ENCODE measurements at regions of chr11 and their contacts with region 1.

Region 1: GRCh38 chr11:128917144-128917724 is 25.4 kb downstream of the TP53AIP1 start:
- DNase-seq: peak in 2 of 9 experiments; percentile 17 to 23
- ATAC-seq: no peak
- H3K4me3 ChIP-seq: no peak overlapping the region
- H3K4me3 Mint-ChIP-seq: no peak overlapping the region
- H3K27ac ChIP-seq: no peak overlapping the region
- H3K27ac Mint-ChIP-seq: no peak overlapping the region
- H3K4me1 ChIP-seq: no peaks in the 10 kb centered on the region
- H3K4me1 Mint-ChIP-seq: no peaks in the 10 kb centered on the region
- H3K27me3 ChIP-seq: no peaks in the 10 kb centered on the region
- H3K27me3 Mint-ChIP-seq: peaks cover 14% of the 10 kb centered on the region
- CTCF ChIP-seq: no peak

Region 2: DNA sequence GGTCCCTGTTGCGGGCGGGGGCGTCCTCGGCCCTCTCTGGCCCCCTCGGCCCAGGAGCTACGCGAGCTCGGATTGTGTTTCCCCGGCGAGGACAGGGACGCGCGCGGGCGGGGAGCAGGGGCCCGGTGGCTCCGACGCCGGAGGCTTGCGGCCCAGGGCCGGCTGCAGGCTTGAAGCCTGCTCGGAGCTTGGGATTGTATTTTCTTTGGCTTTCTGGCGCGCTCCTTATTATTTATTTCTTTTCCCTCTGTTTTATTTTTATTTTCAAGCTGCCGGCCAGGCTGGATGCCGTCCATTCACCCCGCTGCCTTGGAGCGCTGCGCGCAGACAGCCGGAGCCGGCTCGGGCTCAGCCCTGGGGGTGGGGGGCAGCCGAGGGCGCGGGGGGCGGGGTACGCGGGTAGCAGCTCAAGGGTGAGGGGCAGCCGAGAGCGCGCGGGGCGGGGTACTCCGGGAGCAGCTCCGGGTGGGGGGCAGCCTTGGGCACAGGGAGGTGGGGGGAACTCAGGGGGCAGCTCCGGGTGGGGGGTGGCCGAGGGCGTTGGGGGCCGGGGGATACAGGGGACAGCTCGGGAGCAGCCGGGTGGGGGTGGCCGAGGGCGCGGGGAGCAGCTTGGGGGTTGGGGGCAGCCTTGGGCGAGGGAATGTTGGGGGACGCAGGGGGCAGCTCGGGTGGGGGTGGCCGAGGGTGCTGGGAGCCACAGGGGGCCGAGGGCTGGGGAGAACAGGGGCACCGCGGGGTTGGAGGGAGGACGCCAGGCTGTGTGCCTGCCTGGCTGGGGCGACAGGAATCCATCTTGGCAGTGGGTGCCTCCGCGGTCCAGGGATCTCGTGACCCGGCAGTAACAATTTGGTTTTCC is 92.8 kb before region 1 on chr11:
- CTCF ChIA-PET with region 1: no interaction called
- POLR2A ChIA-PET with region 1: no interaction called
- intact Hi-C with region 1: no loop called
- DNase-seq: peak in 1 of 9 experiments; percentile 44
- ATAC-seq: no peak
- H3K4me3 ChIP-seq: no peak overlapping the region
- H3K4me3 Mint-ChIP-seq: no peak overlapping the region
- H3K27ac ChIP-seq: no peak overlapping the region
- H3K27ac Mint-ChIP-seq: no peak overlapping the region
- H3K4me1 ChIP-seq: no peaks in the 10 kb centered on the region
- H3K4me1 Mint-ChIP-seq: no peaks in the 10 kb centered on the region
- H3K27me3 ChIP-seq: no peaks in the 10 kb centered on the region
- H3K27me3 Mint-ChIP-seq: no peaks in the 10 kb centered on the region
- CTCF ChIP-seq: no peak

Region 3: DNA sequence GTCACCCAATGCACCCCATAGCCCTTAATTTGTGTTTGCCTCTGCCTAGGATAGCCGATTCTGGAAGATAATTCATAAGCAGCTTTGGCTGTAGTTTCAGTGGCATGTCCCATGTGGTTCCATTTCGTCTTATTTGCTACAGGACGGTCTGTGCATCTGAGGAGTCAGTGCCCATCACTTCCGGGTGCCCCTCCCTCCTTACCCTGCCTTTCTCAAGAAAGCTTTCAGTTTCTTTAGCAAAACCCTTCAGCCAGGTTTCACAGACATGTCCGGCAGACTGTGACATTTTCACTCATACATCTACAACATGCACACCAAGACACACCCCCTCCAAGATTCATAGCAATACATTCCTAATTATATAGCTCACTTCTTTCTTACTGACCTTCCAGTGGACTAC is 11.2 kb after region 1 on chr11:
- CTCF ChIA-PET with region 1: interaction called, 10 read pairs
- POLR2A ChIA-PET with region 1: no interaction called
- intact Hi-C with region 1: no loop called
- DNase-seq: peak in 2 of 9 experiments; percentile 33 to 52
- ATAC-seq: no peak
- H3K4me3 ChIP-seq: no peak overlapping the region
- H3K4me3 Mint-ChIP-seq: peak overlapping the region; percentile 0
- H3K27ac ChIP-seq: no peak overlapping the region
- H3K27ac Mint-ChIP-seq: no peak overlapping the region
- H3K4me1 ChIP-seq: no peaks in the 10 kb centered on the region
- H3K4me1 Mint-ChIP-seq: no peaks in the 10 kb centered on the region
- H3K27me3 ChIP-seq: no peaks in the 10 kb centered on the region
- H3K27me3 Mint-ChIP-seq: no peaks in the 10 kb centered on the region
- CTCF ChIP-seq: no peak

Measured in CD8-positive, alpha-beta T cell (primary cell).